GM12878 (cell line): ENCODE measurements at regions of chr7 and their contacts with region 1.

Region 1: DNA sequence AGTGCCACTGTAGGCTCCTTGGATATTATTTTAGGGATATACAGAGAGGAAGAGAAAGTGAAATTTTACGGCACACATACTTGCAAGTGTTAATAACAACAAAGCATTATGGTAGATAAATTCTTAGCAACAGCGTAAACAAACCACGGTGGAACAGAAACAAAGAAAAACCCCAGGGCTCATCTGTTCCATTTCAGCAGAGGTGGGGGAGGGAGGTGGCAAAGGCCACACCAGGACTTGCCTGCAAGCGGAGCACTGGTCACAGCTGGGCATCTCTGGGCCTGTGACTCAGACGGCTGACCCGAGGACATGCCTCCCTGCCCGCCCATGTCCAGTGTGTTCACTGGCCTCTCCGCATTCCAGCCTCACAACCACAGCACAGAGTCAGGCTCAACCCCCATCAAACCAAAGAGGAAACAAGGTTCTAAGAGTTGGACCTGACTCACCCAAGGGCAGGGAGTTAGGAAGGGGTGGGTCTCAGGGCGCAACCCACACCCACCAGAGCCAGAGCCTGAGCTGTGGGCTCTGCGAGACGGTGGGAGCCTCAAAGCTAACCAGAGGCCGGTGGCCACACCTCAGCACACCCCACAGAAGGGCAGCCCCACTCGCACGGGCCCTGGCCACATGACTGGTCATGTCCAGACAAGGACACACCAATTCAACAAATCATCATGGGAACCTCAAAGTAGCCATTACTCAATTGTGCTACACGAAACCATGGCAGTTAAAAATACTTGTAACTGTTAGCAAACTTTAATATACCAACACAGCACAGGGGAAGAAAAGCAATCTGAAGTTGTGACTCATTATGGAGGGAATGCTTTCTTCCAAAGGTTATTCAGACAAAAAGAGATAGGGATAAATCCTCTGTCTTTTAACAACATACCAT is 10.7 kb downstream of the ESYT2 start:
- DNase-seq: peak; percentile 47
- ATAC-seq: peak; percentile 93
- H3K4me3 ChIP-seq: peak overlapping the region; percentile 47
- H3K27ac ChIP-seq: peak overlapping the region; percentile 82
- H3K4me1 ChIP-seq: peaks cover 8% of the 10 kb centered on the region; the same call in 1 of the 2 replicates
- H3K27me3 ChIP-seq: no peaks in the 10 kb centered on the region
- CTCF ChIP-seq: peak in 1 of 3 experiments; percentile 34; a peak in 1 of 6 replicates
- EP300 ChIP-seq: peak; percentile 74 to 90; a peak in 3 of 4 replicates
- POLR2A ChIP-seq: peak; percentile 76
- RAD21 ChIP-seq: no peak; the same call in 1 of the 2 replicates

Region 2: GRCh38 chr7:158863611-158864506 is 45.3 kb after region 1 on chr7:
- CTCF ChIA-PET with region 1: interaction called, 3 read pairs
- POLR2A ChIA-PET with region 1: interaction called, 17 read pairs
- RAD21 ChIA-PET with region 1: interaction called, 4 read pairs
- SMC1A ChIA-PET with region 1: interaction called, 7 read pairs
- in situ Hi-C with region 1: no loop called
- intact Hi-C with region 1: no loop called
- DNase-seq: peak; percentile 33
- ATAC-seq: peak; percentile 71
- H3K4me3 ChIP-seq: peak overlapping the region; percentile 60
- H3K27ac ChIP-seq: peak overlapping the region; percentile 52
- H3K4me1 ChIP-seq: peaks cover 8% of the 10 kb centered on the region
- H3K27me3 ChIP-seq: no peaks in the 10 kb centered on the region
- CTCF ChIP-seq: no peak
- EP300 ChIP-seq: no peak
- POLR2A ChIP-seq: peak; percentile 60; the same call in 1 of the 2 replicates
- RAD21 ChIP-seq: no peak